HCT116 (cell line): ENCODE measurements at regions of chr10 and their contacts with region 1.

Region 1: GRCh38 chr10:66931340-66931948 is 5.6 kb downstream of the LRRTM3 start:
- DNase-seq: peak; percentile 55
- ATAC-seq: peak; percentile 74
- H3K4me3 ChIP-seq: no peak overlapping the region
- H3K27ac ChIP-seq: no peak overlapping the region
- H3K4me1 ChIP-seq: no peaks in the 10 kb centered on the region
- H3K27me3 ChIP-seq: no peaks in the 10 kb centered on the region; the same call in 1 of the 2 replicates
- CTCF ChIP-seq: peak; percentile 60 to 90 (median 63); a peak in 5 of 6 replicates
- POLR2A ChIP-seq: no peak
- RAD21 ChIP-seq: peak; percentile 87

Region 2: GRCh38 chr10:64977915-64978314 is 1953.5 kb before region 1 on chr10:
- CTCF ChIA-PET with region 1: no interaction called
- POLR2A ChIA-PET with region 1: no interaction called
- RAD21 ChIA-PET with region 1: no interaction called
- intact Hi-C with region 1: loop called (anchors 5 kb)
- DNase-seq: no peak
- ATAC-seq: no peak
- H3K4me3 ChIP-seq: no peak overlapping the region
- H3K27ac ChIP-seq: no peak overlapping the region
- H3K4me1 ChIP-seq: no peaks in the 10 kb centered on the region
- H3K27me3 ChIP-seq: no peaks in the 10 kb centered on the region
- CTCF ChIP-seq: peak in 1 of 3 experiments; percentile 9; a peak in 2 of 6 replicates
- POLR2A ChIP-seq: no peak
- RAD21 ChIP-seq: peak; percentile 45; the same call in 1 of the 2 replicates

Region 3: GRCh38 chr10:67306588-67307205 is 375.3 kb after region 1 on chr10:
- CTCF ChIA-PET with region 1: interaction called, 6 read pairs
- POLR2A ChIA-PET with region 1: no interaction called
- RAD21 ChIA-PET with region 1: no interaction called
- intact Hi-C with region 1: loop called (anchors 10 kb)
- DNase-seq: peak; percentile 24
- ATAC-seq: peak; percentile 40; the same call in 1 of the 2 replicates
- H3K4me3 ChIP-seq: no peak overlapping the region
- H3K27ac ChIP-seq: no peak overlapping the region
- H3K4me1 ChIP-seq: no peaks in the 10 kb centered on the region
- H3K27me3 ChIP-seq: no peaks in the 10 kb centered on the region
- CTCF ChIP-seq: peak; percentile 37 to 66 (median 48); a peak in 5 of 6 replicates
- POLR2A ChIP-seq: no peak
- RAD21 ChIP-seq: peak; percentile 56

Region 4: GRCh38 chr10:67520924-67521520 is 589.6 kb after region 1 on chr10:
- CTCF ChIA-PET with region 1: interaction called, 8 read pairs
- POLR2A ChIA-PET with region 1: no interaction called
- RAD21 ChIA-PET with region 1: no interaction called
- intact Hi-C with region 1: loop called (anchors 1 kb)
- DNase-seq: peak; percentile 50
- ATAC-seq: peak; percentile 91
- H3K4me3 ChIP-seq: no peak overlapping the region
- H3K27ac ChIP-seq: no peak overlapping the region
- H3K4me1 ChIP-seq: peaks cover 0 to 3% of the 10 kb centered on the region in 2 experiments; a peak in 1 of 4 replicates
- H3K27me3 ChIP-seq: no peaks in the 10 kb centered on the region
- CTCF ChIP-seq: peak; percentile 65 to 89 (median 79)
- POLR2A ChIP-seq: no peak
- RAD21 ChIP-seq: peak; percentile 84